Activated CD4-positive, alpha-beta T cell treated with anti-CD3 and anti-CD28 coated beads for 36 hours (primary cell): ENCODE measurements at regions of chr1 and their contacts with region 1.

Region 1: GRCh38 chr1:19651141-19651737 is 7.1 kb downstream of the NBL1 start:
- DNase-seq: peak; percentile 73
- ATAC-seq: peak; percentile 72
- H3K4me3 Mint-ChIP-seq: no peak overlapping the region
- H3K27ac Mint-ChIP-seq: no peak overlapping the region
- H3K4me1 Mint-ChIP-seq: peaks cover 18% of the 10 kb centered on the region
- H3K27me3 Mint-ChIP-seq: no peaks in the 10 kb centered on the region

Region 2: DNA sequence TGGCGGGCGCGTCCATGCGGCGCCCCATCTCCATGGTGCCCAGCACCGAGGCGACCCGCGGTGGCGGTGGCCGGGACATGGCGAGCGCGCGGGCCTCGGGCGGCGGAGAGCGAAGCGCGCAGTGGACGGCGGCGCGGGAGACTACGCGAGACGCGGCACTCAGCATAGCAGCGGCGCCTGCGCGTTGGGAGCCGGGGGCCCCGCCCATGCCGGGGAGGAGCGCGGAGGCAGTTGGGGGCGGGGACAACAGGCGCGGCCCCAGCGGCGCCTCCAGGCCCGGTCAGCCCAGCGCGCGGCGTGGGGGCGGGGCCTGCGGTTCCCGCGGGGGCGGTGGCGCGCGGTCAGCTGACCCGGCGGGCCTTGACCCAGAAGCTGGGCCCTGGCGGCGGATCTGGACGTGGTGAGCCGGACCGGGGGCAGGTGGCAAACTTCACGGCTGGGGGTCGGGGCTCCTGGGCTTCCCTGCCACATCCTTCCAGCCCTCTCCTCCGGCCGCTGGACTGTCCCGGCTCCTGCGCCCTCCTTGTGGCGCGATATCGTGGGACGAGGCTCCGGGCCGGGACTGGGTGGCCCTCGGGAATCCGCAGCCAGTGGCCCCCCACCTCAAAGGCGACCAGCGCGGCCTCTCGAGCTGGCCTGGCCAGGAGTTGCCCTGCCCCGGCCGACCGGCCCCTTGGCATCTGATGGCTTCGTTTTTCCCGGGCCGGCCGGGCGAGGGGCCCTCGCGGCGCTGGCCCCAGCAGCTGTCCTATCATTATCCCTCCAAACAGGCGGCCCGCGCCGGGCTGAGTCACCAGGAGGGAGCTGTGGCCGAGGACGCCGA is 339.1 kb before region 1 on chr1 and contains the starts of genes AKR7A2 and SLC66A1:
- CTCF ChIA-PET with region 1: interaction called, 3 read pairs
- POLR2A ChIA-PET with region 1: no interaction called
- intact Hi-C with region 1: loop called (anchors 10 kb)
- DNase-seq: peak; percentile 95
- ATAC-seq: peak; percentile 97
- H3K4me3 Mint-ChIP-seq: peak within 1 kb of the TSS; percentile 78
- H3K27ac Mint-ChIP-seq: peak within 1 kb of the TSS; percentile 61
- H3K4me1 Mint-ChIP-seq: peaks cover 23% of the 10 kb centered on the region
- H3K27me3 Mint-ChIP-seq: no peaks in the 10 kb centered on the region
- total RNA-seq, gene AKR7A2: 41.3 to 43.0 TPM
- total RNA-seq, gene SLC66A1: 5.9 to 6.5 TPM

Region 3: DNA sequence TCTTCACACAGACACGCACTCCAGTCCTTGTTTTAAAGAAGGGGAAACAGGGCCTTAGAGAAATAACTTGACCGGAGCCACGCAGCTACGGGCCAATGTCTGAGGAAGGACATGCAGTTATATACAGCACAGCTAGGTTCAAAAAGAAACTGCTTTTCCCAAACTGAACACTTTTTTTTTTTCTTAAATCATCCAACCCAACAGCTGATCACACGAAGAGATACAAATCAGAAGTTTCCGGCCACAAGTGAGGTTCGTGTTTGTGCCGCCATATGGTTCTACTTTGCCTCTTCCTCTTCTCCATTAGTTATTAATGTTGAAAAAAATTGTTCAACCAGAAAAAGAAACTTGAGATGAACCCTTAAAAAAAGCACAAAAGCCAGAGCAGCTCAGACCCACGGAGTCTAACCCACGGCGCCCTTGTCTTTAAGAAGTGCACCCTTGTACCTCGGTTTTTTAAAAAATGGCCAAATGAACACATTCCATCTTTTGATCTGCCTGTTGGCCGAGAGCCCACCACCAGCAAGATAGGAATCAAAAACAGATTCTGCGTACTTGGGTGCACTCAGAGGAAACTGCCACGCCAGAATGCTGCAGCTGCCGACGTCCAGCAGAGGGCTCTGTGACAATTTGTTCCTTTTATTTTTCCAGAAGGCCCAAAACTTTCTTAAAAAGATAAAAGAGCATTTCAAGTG is 260.2 kb before region 1 on chr1:
- CTCF ChIA-PET with region 1: interaction called, 16 read pairs
- POLR2A ChIA-PET with region 1: no interaction called
- intact Hi-C with region 1: loop called (anchors 1 to 5 kb)
- DNase-seq: peak; percentile 77
- ATAC-seq: peak; percentile 52
- H3K4me3 Mint-ChIP-seq: peak overlapping the region; percentile 73
- H3K27ac Mint-ChIP-seq: peak overlapping the region; percentile 95
- H3K4me1 Mint-ChIP-seq: peaks cover 81% of the 10 kb centered on the region
- H3K27me3 Mint-ChIP-seq: no peaks in the 10 kb centered on the region

Region 4: DNA sequence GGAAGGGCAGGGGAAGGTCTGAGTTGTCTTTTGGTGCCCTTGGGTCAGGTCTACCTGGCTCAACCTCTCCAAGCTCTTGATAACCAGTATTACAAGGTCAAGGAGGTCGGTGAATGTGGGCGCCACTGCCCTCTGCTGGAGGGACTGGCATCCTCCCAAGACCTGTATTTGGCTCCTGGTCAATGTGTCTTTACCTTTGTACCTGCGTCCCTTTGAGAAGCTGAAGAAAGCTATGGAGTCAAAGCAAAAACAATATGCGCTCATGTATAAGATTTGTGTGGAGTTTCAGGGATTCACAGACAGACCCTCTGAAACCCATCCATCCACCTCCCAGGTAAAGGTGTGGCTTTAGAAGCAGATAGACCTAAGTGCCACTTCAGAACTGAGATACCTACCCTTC is 68.9 kb before region 1 on chr1:
- CTCF ChIA-PET with region 1: interaction called, 3 read pairs
- POLR2A ChIA-PET with region 1: no interaction called
- intact Hi-C with region 1: loop called in 1 of 2 experiments (anchors 1 kb)
- DNase-seq: peak; percentile 89
- ATAC-seq: peak; percentile 96
- H3K4me3 Mint-ChIP-seq: no peak overlapping the region
- H3K27ac Mint-ChIP-seq: no peak overlapping the region
- H3K4me1 Mint-ChIP-seq: peaks cover 8% of the 10 kb centered on the region
- H3K27me3 Mint-ChIP-seq: peaks cover 2% of the 10 kb centered on the region